PC-9 (cell line): ENCODE measurements at regions of chr10 and their contacts with region 1.

Region 1: GRCh38 chr10:79149662-79150443 is 81.1 kb downstream of the ZMIZ1 start:
- DNase-seq: peak; percentile 92 to 99
- H3K4me3 ChIP-seq: peak overlapping the region; percentile 29; the same call in 1 of the 2 replicates
- H3K27ac ChIP-seq: peak overlapping the region; percentile 90
- H3K4me1 ChIP-seq: peaks cover 62% of the 10 kb centered on the region
- H3K27me3 ChIP-seq: no peaks in the 10 kb centered on the region
- CTCF ChIP-seq: no peak

Region 2: GRCh38 chr10:78302989-78303854 is 846.6 kb before region 1 on chr10:
- CTCF ChIA-PET with region 1: no interaction called
- POLR2A ChIA-PET with region 1: interaction called, 52 read pairs
- intact Hi-C with region 1: loop called (anchors 1 kb)
- DNase-seq: peak; percentile 83 to 98
- H3K4me3 ChIP-seq: peak overlapping the region; percentile 66
- H3K27ac ChIP-seq: peak overlapping the region; percentile 42; the same call in 1 of the 2 replicates
- H3K4me1 ChIP-seq: peaks cover 10% of the 10 kb centered on the region
- H3K27me3 ChIP-seq: no peaks in the 10 kb centered on the region
- CTCF ChIP-seq: peak; percentile 81

Region 3: DNA sequence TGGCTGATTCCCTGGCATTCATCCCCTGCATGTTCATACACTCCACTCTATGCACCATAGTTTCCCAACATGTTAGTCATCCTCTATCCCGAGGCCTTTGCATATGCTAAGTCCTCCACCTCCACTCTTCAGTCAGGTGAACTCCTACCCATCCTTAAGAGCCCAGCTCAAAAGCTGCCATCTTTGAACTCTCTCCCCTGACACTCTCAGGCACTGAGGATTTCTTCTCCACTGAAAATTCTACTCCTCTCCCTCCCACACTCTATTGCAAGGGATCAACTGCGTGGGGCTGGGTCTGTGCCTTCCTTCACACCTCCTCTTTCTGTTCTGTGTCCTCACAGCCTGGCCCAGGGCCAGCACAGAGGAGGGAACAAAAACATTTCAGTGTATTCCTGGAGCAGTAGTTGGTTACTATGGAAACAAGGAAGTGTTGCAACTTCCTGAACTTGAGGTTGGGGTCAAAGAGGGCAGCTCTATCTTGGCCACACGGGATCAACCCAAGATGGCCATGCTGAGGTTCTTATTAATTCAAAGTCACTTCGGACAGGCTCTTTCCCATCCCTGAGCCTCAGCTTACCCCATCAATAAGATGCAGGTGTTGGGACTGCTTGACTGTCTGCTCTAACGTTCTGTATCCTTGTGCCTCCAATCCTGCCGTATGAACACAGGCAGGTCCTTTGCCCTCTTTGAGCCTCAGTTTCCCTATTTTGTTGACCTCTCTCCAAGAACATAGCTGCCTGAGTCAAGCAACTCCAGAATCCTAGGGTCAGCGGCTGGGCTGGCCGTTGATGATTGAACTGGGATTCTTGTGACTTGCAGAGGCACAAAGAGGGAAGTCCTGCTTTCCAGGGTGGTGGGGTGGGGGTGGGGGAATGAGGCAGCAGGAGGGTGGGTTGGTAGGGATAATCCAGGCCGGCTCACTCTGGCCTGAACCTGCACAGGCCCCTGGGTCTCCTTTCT is 65.6 kb before region 1 on chr10:
- CTCF ChIA-PET with region 1: no interaction called
- POLR2A ChIA-PET with region 1: interaction called, 3 read pairs
- intact Hi-C with region 1: loop called (anchors 2 kb)
- DNase-seq: peak; percentile 82 to 83
- H3K4me3 ChIP-seq: no peak overlapping the region
- H3K27ac ChIP-seq: 0 out of 2 replicates have a peak overlapping the region, but pooled peaks have one; percentile 1
- H3K4me1 ChIP-seq: peaks cover 53% of the 10 kb centered on the region
- H3K27me3 ChIP-seq: no peaks in the 10 kb centered on the region
- CTCF ChIP-seq: no peak

Region 4: GRCh38 chr10:79184145-79184625 is 34.3 kb after region 1 on chr10:
- CTCF ChIA-PET with region 1: interaction called, 3 read pairs
- POLR2A ChIA-PET with region 1: interaction called, 27 read pairs
- intact Hi-C with region 1: no loop called
- DNase-seq: peak; percentile 91 to 96
- H3K4me3 ChIP-seq: no peak overlapping the region
- H3K27ac ChIP-seq: peak overlapping the region; percentile 54
- H3K4me1 ChIP-seq: peaks cover 44% of the 10 kb centered on the region
- H3K27me3 ChIP-seq: no peaks in the 10 kb centered on the region
- CTCF ChIP-seq: no peak